ENCODE measurements at regions of chr10 and their contacts with region 1.

Region 1: DNA sequence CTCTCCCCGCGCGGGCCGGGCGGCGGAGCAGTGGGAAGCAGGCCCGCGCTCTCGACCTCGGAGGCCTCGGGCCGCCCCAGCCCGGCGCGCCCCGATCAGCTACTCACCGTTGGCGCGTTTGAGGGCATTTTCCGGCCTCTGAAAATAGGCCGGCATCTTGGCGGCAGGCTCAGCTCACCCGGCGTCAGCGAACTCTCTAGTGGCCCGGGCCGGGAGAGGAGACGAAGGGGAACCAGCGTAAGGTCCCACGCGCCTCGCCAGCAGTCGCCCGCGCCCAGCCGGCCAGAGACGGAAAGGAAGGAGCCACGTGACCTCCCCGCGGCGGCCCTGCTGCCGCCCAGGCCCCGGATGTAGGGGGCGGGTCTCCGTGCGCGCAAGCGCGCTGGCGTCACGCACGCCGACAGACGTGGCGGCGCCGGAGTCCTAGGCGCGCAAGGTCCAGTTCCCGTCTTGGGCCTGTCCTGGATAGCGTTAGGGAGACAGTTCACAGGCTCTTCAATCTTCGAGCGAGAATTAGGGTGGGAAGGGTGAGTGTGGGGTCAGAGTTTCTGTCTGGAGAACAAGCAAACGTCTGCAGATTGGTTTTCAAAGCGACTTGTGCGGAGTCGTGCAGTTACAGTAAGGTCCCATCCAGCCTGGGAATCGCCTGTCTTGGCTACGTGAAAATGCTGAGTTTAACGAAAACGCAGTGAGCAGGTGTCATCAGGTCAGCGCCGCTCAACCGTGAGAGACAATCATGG is at the start of gene EIF3A:
- DNase-seq: peak; percentile 95
- H3K4me3 ChIP-seq: peak within 1 kb of the TSS; percentile 79 to 85 (median 81)
- H3K27ac ChIP-seq: peak within 1 kb of the TSS; percentile 96 to 98 (median 98)
- H3K4me1 ChIP-seq: peaks cover 0 to 41% (median 34%) of the 10 kb centered on the region in 4 donors
- H3K27me3 ChIP-seq: no peaks in the 10 kb centered on the region
- CTCF ChIP-seq: no peak
- EP300 ChIP-seq: peak in 2 of 4 donors; percentile 21 to 60
- POLR2A ChIP-seq: peak; percentile 97
- total RNA-seq, gene EIF3A: 98.4 to 135 (median 110) TPM

Region 2: GRCh38 chr10:119028900-119029612 is 51.6 kb before region 1 on chr10:
- intact Hi-C with region 1: loop called (anchors 5 kb)
- DNase-seq: peak; percentile 95
- H3K4me3 ChIP-seq: peak overlapping the region; percentile 21 to 77 (median 69)
- H3K27ac ChIP-seq: peak overlapping the region; percentile 76 to 89 (median 82)
- H3K4me1 ChIP-seq: peaks cover 0 to 54% (median 50%) of the 10 kb centered on the region in 4 donors
- H3K27me3 ChIP-seq: no peaks in the 10 kb centered on the region
- CTCF ChIP-seq: no peak
- EP300 ChIP-seq: no peak
- POLR2A ChIP-seq: no peak

Region 3: GRCh38 chr10:119103903-119104652 is 23.4 kb after region 1 on chr10 and contains the start of gene DENND10:
- intact Hi-C with region 1: loop called (anchors 1 kb)
- DNase-seq: peak; percentile 94
- H3K4me3 ChIP-seq: peak within 1 kb of the TSS; percentile 58 to 95 (median 90)
- H3K27ac ChIP-seq: peak within 1 kb of the TSS; percentile 76 to 94 (median 88)
- H3K4me1 ChIP-seq: peaks cover 0 to 18% (median 14%) of the 10 kb centered on the region in 4 donors
- H3K27me3 ChIP-seq: no peaks in the 10 kb centered on the region
- CTCF ChIP-seq: no peak
- EP300 ChIP-seq: no peak
- POLR2A ChIP-seq: peak; percentile 68 to 81
- total RNA-seq, gene DENND10: 35.0 to 51.3 (median 39.3) TPM

Measured in sigmoid colon (tissue), 7 donors.